OCI-LY7 (cell line): ENCODE measurements at regions of chr10 and their contacts with region 1.

Region 1: DNA sequence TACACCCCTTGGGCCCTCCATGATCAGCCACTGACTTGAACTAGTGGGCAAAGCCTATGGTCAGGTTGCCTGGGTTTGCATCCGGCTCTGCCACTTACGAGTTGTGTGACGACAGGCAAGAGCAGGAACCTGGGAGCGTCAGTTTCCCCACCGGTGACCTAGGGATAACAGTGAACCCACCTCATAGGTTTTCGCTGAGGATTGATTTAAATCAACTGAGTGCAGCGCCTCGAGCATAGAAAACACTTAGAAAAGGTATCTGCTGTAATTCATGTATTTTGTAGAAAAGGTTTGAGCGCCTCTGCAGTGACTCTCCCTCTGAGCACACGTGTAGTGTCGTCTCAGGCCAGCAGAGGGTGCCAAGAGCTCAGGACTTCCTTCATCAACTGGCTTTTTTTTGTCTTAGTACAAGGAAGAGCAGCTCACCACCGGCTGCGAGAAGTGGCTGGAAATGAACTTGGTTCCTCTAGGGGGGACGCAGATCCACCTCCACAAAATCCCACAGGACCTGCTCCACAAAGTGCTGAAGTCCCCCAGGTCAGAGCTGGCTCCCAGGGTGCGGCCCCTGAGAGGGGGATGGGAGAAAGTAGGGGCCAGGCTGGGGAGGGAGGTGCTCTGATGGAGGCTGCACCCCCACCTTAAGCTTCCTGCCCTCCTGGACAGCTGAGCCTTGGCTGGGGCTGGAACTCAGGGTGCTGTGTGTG is 27.7 kb downstream of the BTBD16 start:
- DNase-seq: peak; percentile 84
- H3K4me3 ChIP-seq: peak overlapping the region; percentile 37
- H3K27ac ChIP-seq: no peak overlapping the region
- H3K4me1 ChIP-seq: peaks cover 8% of the 10 kb centered on the region
- CTCF ChIP-seq: peak; percentile 95

Region 2: GRCh38 chr10:122435212-122435827 is 136.6 kb after region 1 on chr10:
- CTCF ChIA-PET with region 1: interaction called, 15 read pairs
- POLR2A ChIA-PET with region 1: interaction called, 8 read pairs
- intact Hi-C with region 1: loop called (anchors 1 kb)
- DNase-seq: peak; percentile 76
- H3K4me3 ChIP-seq: no peak overlapping the region
- H3K27ac ChIP-seq: no peak overlapping the region
- H3K4me1 ChIP-seq: no peaks in the 10 kb centered on the region
- CTCF ChIP-seq: peak; percentile 97

Region 3: DNA sequence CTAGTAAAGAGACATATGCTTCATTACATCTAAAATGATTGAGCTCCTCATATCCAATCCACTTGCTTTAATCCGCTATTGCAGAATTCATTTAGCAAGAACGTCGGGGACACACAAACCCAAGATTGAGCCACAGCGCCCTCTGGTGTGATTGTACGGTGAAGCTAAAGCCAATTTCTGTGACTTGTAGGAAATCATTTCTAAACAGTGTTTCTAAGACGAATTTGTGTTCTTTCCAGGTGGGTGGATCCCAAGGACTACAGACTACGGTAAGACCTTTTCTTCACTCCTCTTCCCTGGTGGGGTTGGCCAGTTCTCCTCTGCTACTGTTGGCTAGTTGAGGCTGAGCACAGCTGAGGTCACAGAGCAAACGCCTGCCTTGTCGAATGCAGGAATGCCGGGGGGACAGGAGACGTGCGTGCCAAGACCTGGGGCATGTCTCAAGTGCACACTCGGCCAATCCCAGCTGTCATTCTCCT is 267.0 kb after region 1 on chr10:
- CTCF ChIA-PET with region 1: interaction called, 7 read pairs
- POLR2A ChIA-PET with region 1: no interaction called
- intact Hi-C with region 1: loop called (anchors 2 kb)
- DNase-seq: peak; percentile 57
- H3K4me3 ChIP-seq: no peak overlapping the region
- H3K27ac ChIP-seq: no peak overlapping the region
- H3K4me1 ChIP-seq: no peaks in the 10 kb centered on the region
- CTCF ChIP-seq: peak; percentile 84